Endothelial cell of umbilical vein (primary cell): ENCODE measurements at regions of chr4 and their contacts with region 1.

Region 1: DNA sequence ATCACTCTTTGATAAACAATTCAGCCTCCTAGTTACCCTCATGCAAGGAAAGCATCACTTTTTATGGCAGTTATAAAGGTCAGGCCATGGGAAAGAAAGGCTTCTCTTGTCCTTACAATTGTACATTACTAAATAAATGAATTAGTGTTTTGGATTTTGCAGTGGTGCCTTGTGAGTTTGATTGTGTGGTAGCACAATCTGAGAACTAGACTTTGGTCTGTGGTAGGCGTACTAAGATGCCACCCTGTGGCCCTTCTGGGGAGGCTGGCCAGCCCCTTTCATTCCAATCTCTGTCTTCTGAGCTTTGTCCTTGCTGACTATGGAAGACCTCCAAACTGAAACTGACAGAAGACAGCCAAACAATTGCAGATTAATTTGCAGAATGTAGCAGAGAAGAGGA is 14.6 kb upstream of the HNRNPD start:
- DNase-seq: no peak
- H3K4me3 ChIP-seq: no peak overlapping the region
- H3K27ac ChIP-seq: no peak overlapping the region
- H3K4me1 ChIP-seq: no peaks in the 10 kb centered on the region
- H3K27me3 ChIP-seq: no peaks in the 10 kb centered on the region
- CTCF ChIP-seq: no peak
- POLR2A ChIP-seq: no peak

Region 2: DNA sequence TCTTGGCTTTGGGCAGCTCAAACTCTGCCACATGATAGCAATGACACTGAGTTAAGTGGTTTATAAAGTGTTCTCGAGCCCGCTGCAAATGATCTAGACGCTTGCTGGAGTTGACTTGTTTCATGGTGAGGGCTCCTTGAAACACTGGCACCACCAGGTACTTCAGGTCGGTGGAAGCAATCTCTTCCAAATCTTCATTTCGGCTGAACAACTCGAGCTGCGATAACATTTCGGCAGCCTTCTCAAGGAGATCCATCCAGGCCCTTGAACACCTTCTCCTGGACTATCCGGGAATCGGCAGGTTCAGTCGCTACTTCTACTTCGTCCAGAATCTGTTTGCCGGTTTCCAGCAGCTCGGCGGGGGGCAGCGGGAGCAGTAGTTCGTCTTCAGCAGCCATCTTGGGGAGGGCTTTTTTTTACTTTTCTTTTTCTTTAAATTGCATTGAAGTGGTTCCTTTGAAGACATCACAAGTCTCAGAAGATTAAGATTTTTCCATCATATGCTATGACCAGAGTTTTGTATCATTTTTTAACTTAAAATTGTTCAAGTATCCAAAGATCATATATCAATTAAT is 13.9 kb after region 1 on chr4:
- CTCF ChIA-PET with region 1: interaction called, 5 read pairs
- POLR2A ChIA-PET with region 1: no interaction called
- dilution Hi-C with region 1: no loop called
- intact Hi-C with region 1: loop called (anchors 2 kb)
- DNase-seq: no peak
- H3K4me3 ChIP-seq: no peak overlapping the region
- H3K27ac ChIP-seq: no peak overlapping the region
- H3K4me1 ChIP-seq: no peaks in the 10 kb centered on the region
- H3K27me3 ChIP-seq: peaks cover 3 to 5% of the 10 kb centered on the region in 2 experiments
- CTCF ChIP-seq: no peak
- POLR2A ChIP-seq: no peak